ENCODE measurements at regions of chr6 and their contacts with region 1.

Region 1: DNA sequence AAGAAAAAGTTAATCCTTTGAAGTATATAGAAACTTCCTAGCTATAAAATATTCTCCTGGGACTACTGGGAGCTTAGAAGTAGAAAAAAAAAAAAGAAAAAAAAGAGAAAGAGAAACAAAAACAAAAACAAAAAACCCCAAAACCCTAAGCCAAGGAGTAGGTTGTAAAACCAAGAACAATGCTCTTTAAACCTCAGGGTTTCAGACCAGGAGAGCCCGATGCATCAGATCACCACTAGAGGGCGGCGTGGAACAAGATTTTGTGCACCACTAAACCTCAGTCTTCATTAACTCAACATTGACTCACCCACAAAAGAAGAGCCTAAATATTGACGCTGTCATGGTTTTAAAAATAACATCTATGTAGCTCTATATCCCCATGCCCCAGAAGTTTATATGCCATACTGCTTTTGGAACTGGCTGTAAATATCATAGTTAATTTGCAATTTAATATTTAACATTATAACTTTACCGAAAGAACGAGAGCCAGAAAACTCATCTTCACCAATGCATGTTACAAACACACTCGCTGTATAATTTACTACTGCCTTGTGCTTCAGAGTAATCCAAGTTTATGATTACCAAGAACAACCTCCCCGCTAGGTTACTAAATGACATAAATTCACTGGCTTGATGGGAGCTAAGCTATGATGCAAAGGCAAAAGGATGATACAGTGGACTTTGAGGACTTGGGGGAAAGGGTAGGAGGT is 19.2 kb downstream of the MCUR1 start:
- DNase-seq: peak; percentile 46
- ATAC-seq: peak; percentile 94
- H3K4me3 ChIP-seq: no peak overlapping the region
- H3K27ac ChIP-seq: no peak overlapping the region
- H3K4me1 ChIP-seq: no peaks in the 10 kb centered on the region
- H3K27me3 ChIP-seq: no peaks in the 10 kb centered on the region
- CTCF ChIP-seq: peak; percentile 65 to 95 (median 88)
- POLR2A ChIP-seq: no peak
- RAD21 ChIP-seq: peak; percentile 81

Region 2: GRCh38 chr6:12785301-12785700 is 1009.9 kb before region 1 on chr6:
- CTCF ChIA-PET with region 1: no interaction called
- POLR2A ChIA-PET with region 1: no interaction called
- RAD21 ChIA-PET with region 1: no interaction called
- intact Hi-C with region 1: no loop called
- DNase-seq: no peak
- ATAC-seq: no peak
- H3K4me3 ChIP-seq: no peak overlapping the region
- H3K27ac ChIP-seq: no peak overlapping the region
- H3K4me1 ChIP-seq: no peaks in the 10 kb centered on the region
- H3K27me3 ChIP-seq: peaks cover 10% of the 10 kb centered on the region; the same call in 1 of the 2 replicates
- CTCF ChIP-seq: no peak
- POLR2A ChIP-seq: no peak
- RAD21 ChIP-seq: no peak

Region 3: DNA sequence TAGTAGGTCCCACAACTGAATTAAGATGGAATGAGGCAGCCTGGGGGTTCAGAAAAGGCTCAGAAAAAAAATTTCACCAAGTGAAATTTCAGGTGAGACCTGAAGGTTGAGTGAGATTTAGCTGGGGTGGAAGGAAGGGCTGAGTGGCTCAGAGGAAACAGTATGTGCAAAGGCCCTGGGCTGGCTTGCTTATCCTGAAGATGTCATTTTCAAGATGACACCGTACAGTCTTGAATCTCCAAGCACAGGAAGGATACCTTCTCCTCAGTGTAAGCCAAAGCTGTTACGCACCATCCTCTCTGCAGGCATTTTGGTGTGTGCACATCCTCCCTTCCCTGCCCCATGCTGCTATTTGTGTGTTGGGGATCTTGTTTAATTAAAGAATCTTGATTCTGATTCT is 40.6 kb before region 1 on chr6:
- CTCF ChIA-PET with region 1: no interaction called
- POLR2A ChIA-PET with region 1: no interaction called
- RAD21 ChIA-PET with region 1: no interaction called
- intact Hi-C with region 1: no loop called
- DNase-seq: no peak
- ATAC-seq: no peak
- H3K4me3 ChIP-seq: no peak overlapping the region
- H3K27ac ChIP-seq: no peak overlapping the region
- H3K4me1 ChIP-seq: peaks cover 0 to 7% of the 10 kb centered on the region in 2 experiments; a peak in 2 of 4 replicates
- H3K27me3 ChIP-seq: no peaks in the 10 kb centered on the region
- CTCF ChIP-seq: no peak
- POLR2A ChIP-seq: no peak
- RAD21 ChIP-seq: no peak

Region 4: DNA sequence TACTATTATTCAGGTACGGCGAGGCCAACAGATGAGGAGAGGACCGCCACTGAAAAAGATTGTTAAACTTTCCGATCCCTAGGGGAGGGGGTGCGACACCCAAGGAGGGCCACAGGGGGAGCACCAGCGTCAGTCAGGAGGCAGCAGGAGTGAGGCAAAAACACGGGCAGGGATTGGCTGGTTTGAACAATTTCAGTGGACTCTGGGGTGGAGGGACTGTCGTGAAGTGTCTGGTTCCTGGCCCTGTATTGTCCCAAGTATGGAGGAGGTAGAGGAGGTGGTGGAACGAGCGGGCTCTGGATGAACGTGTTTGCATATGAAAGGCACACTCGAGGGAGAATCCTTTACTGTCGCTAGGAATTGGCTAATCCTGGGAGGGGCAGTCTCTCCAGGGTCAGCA is 51.6 kb after region 1 on chr6:
- CTCF ChIA-PET with region 1: no interaction called
- POLR2A ChIA-PET with region 1: no interaction called
- RAD21 ChIA-PET with region 1: no interaction called
- intact Hi-C with region 1: no loop called
- DNase-seq: peak; percentile 35
- ATAC-seq: peak; percentile 91
- H3K4me3 ChIP-seq: no peak overlapping the region
- H3K27ac ChIP-seq: no peak overlapping the region
- H3K4me1 ChIP-seq: no peaks in the 10 kb centered on the region
- H3K27me3 ChIP-seq: no peaks in the 10 kb centered on the region
- CTCF ChIP-seq: peak in 2 of 3 experiments; percentile 46 to 60; a peak in 4 of 6 replicates
- POLR2A ChIP-seq: no peak
- RAD21 ChIP-seq: no peak

Region 5: GRCh38 chr6:14144678-14145113 is 349.5 kb after region 1 on chr6:
- CTCF ChIA-PET with region 1: no interaction called
- POLR2A ChIA-PET with region 1: no interaction called
- RAD21 ChIA-PET with region 1: no interaction called
- intact Hi-C with region 1: loop called (anchors 5 kb)
- DNase-seq: peak; percentile 69
- ATAC-seq: peak; percentile 100
- H3K4me3 ChIP-seq: no peak overlapping the region
- H3K27ac ChIP-seq: no peak overlapping the region
- H3K4me1 ChIP-seq: no peaks in the 10 kb centered on the region
- H3K27me3 ChIP-seq: no peaks in the 10 kb centered on the region
- CTCF ChIP-seq: peak; percentile 74 to 97 (median 93)
- POLR2A ChIP-seq: no peak
- RAD21 ChIP-seq: peak; percentile 82

Measured in HCT116 (cell line).